GM12878 (cell line): ENCODE measurements at regions of chr2 and their contacts with region 1.

Region 1: DNA sequence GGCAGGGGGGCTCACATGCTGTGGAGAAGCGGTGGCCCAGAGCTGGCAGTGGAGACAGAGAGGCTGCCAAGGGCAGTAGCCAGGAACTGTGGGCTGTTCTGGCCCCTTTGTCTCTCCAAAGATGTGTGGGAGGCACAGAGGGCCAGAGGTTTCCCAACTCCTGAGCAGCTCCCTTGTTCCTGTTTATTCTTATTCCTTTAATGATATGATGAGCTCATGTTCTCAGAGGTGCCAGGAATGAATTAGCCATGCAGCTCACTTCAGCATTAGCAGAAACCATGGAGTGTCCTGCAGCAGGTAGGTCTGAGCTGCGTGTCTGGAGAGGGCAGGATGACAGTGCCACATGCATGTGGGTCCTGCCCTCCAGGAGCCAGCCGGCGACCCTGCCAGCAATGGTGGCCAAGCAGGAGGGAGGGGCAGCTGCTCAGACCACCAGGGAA is 77.9 kb upstream of the FZD7 start:
- DNase-seq: no peak
- ATAC-seq: no peak
- H3K4me3 ChIP-seq: no peak overlapping the region
- H3K27ac ChIP-seq: no peak overlapping the region
- H3K4me1 ChIP-seq: no peaks in the 10 kb centered on the region
- H3K27me3 ChIP-seq: no peaks in the 10 kb centered on the region; a peak in 1 of 4 replicates
- CTCF ChIP-seq: no peak
- EP300 ChIP-seq: no peak
- POLR2A ChIP-seq: no peak
- RAD21 ChIP-seq: no peak

Region 2: GRCh38 chr2:201909961-201910361 is 45.8 kb before region 1 on chr2:
- CTCF ChIA-PET with region 1: no interaction called
- POLR2A ChIA-PET with region 1: no interaction called
- RAD21 ChIA-PET with region 1: no interaction called
- SMC1A ChIA-PET with region 1: no interaction called
- in situ Hi-C with region 1: loop called (anchors 5 kb)
- intact Hi-C with region 1: no loop called
- DNase-seq: peak; percentile 27
- ATAC-seq: peak; percentile 91
- H3K4me3 ChIP-seq: no peak overlapping the region
- H3K27ac ChIP-seq: no peak overlapping the region; the same call in 1 of the 2 replicates
- H3K4me1 ChIP-seq: peaks cover 10% of the 10 kb centered on the region
- H3K27me3 ChIP-seq: no peaks in the 10 kb centered on the region
- CTCF ChIP-seq: no peak
- EP300 ChIP-seq: no peak
- POLR2A ChIP-seq: no peak
- RAD21 ChIP-seq: no peak

Region 3: GRCh38 chr2:201938149-201938785 is 17.5 kb before region 1 on chr2:
- CTCF ChIA-PET with region 1: no interaction called
- POLR2A ChIA-PET with region 1: no interaction called
- RAD21 ChIA-PET with region 1: no interaction called
- SMC1A ChIA-PET with region 1: no interaction called
- in situ Hi-C with region 1: no loop called
- intact Hi-C with region 1: no loop called
- DNase-seq: no peak
- ATAC-seq: no peak
- H3K4me3 ChIP-seq: no peak overlapping the region
- H3K27ac ChIP-seq: no peak overlapping the region
- H3K4me1 ChIP-seq: no peaks in the 10 kb centered on the region
- H3K27me3 ChIP-seq: peaks cover 0 to 6% of the 10 kb centered on the region in 2 experiments; a peak in 2 of 4 replicates
- CTCF ChIP-seq: no peak
- EP300 ChIP-seq: no peak
- POLR2A ChIP-seq: no peak
- RAD21 ChIP-seq: no peak